ENCODE measurements at regions of chr12 and their contacts with region 1.

Region 1: GRCh38 chr12:6890789-6891645 is 13.6 kb upstream of the LRRC23 start:
- DNase-seq: peak; percentile 100
- ATAC-seq: peak; percentile 94
- H3K4me3 Mint-ChIP-seq: peak overlapping the region; percentile 87
- H3K27ac Mint-ChIP-seq: peak overlapping the region; percentile 94
- H3K4me1 Mint-ChIP-seq: peaks cover 12% of the 10 kb centered on the region
- H3K27me3 Mint-ChIP-seq: no peaks in the 10 kb centered on the region

Region 2: GRCh38 chr12:6662906-6663742 is 227.9 kb before region 1 on chr12 and contains the start of gene ING4:
- CTCF ChIA-PET with region 1: no interaction called
- POLR2A ChIA-PET with region 1: no interaction called
- intact Hi-C with region 1: loop called in 1 of 2 experiments (anchors 1 kb)
- DNase-seq: peak; percentile 98
- ATAC-seq: peak; percentile 98
- H3K4me3 Mint-ChIP-seq: peak within 1 kb of the TSS; percentile 84
- H3K27ac Mint-ChIP-seq: peak within 1 kb of the TSS; percentile 91
- H3K4me1 Mint-ChIP-seq: peaks cover 24% of the 10 kb centered on the region
- H3K27me3 Mint-ChIP-seq: no peaks in the 10 kb centered on the region
- total RNA-seq, gene ING4: 14.9 to 17.6 TPM

Region 3: GRCh38 chr12:6778574-6779550 is 112.2 kb before region 1 on chr12:
- CTCF ChIA-PET with region 1: no interaction called
- POLR2A ChIA-PET with region 1: no interaction called
- intact Hi-C with region 1: loop called in 1 of 2 experiments (anchors 2 kb)
- DNase-seq: peak; percentile 95
- ATAC-seq: peak; percentile 59
- H3K4me3 Mint-ChIP-seq: peak overlapping the region; percentile 72
- H3K27ac Mint-ChIP-seq: peak overlapping the region; percentile 84
- H3K4me1 Mint-ChIP-seq: peaks cover 91% of the 10 kb centered on the region
- H3K27me3 Mint-ChIP-seq: peaks cover 5% of the 10 kb centered on the region

Region 4: GRCh38 chr12:6873094-6874014 is 17.7 kb before region 1 on chr12 and contains the start of gene SPSB2:
- CTCF ChIA-PET with region 1: interaction called, 38 read pairs
- POLR2A ChIA-PET with region 1: interaction called, 15 read pairs
- intact Hi-C with region 1: loop called (anchors 1 kb)
- DNase-seq: peak; percentile 100
- ATAC-seq: peak; percentile 74
- H3K4me3 Mint-ChIP-seq: peak within 1 kb of the TSS; percentile 93
- H3K27ac Mint-ChIP-seq: peak within 1 kb of the TSS; percentile 86
- H3K4me1 Mint-ChIP-seq: peaks cover 50% of the 10 kb centered on the region
- H3K27me3 Mint-ChIP-seq: no peaks in the 10 kb centered on the region
- total RNA-seq, gene SPSB2: 1.7 to 2.2 TPM

Region 5: GRCh38 chr12:6914246-6914946 is 23.4 kb after region 1 on chr12 and contains the start of gene ENO2:
- CTCF ChIA-PET with region 1: interaction called, 5 read pairs
- POLR2A ChIA-PET with region 1: interaction called, 3 read pairs
- intact Hi-C with region 1: loop called in 1 of 2 experiments (anchors 1 kb)
- DNase-seq: peak; percentile 92
- ATAC-seq: peak; percentile 92
- H3K4me3 Mint-ChIP-seq: peak within 1 kb of the TSS; percentile 98
- H3K27ac Mint-ChIP-seq: peak within 1 kb of the TSS; percentile 80
- H3K4me1 Mint-ChIP-seq: peaks cover 35% of the 10 kb centered on the region
- H3K27me3 Mint-ChIP-seq: no peaks in the 10 kb centered on the region
- total RNA-seq, gene ENO2: 301 to 317 TPM

Region 6: GRCh38 chr12:6944381-6945186 is 53.6 kb after region 1 on chr12:
- CTCF ChIA-PET with region 1: interaction called, 3 read pairs
- POLR2A ChIA-PET with region 1: interaction called, 18 read pairs
- intact Hi-C with region 1: no loop called
- DNase-seq: peak; percentile 94
- ATAC-seq: peak; percentile 54
- H3K4me3 Mint-ChIP-seq: peak overlapping the region; percentile 81
- H3K27ac Mint-ChIP-seq: peak overlapping the region; percentile 97
- H3K4me1 Mint-ChIP-seq: peaks cover 59% of the 10 kb centered on the region
- H3K27me3 Mint-ChIP-seq: no peaks in the 10 kb centered on the region

Region 7: DNA sequence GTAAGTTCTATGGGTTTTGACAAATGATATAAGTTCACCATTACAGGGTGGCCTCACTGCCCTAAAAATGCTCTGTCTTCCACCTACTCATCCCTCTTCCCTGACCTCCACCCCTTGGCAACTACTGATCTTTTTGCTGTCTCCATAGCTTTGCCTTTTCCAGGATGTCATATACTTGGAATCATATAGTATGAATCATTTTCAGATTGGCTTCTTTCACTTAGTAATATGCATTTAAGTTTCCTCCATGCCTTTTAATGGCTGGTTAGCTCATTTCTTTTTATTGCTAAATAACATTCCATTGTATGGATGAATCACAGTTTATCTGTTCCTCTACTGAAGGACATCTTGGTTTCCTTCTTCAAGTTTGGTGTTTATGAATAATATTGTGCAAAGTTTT is 284.5 kb after region 1 on chr12:
- CTCF ChIA-PET with region 1: no interaction called
- POLR2A ChIA-PET with region 1: no interaction called
- intact Hi-C with region 1: no loop called
- DNase-seq: no peak
- ATAC-seq: no peak
- H3K4me3 Mint-ChIP-seq: no peak overlapping the region
- H3K27ac Mint-ChIP-seq: no peak overlapping the region
- H3K4me1 Mint-ChIP-seq: no peaks in the 10 kb centered on the region
- H3K27me3 Mint-ChIP-seq: peaks cover 13% of the 10 kb centered on the region

Measured in activated CD4-positive, alpha-beta T cell treated with anti-CD3 and anti-CD28 coated beads for 36 hours (primary cell).